PC-9 (cell line): ENCODE measurements at regions of chr5 and their contacts with region 1.

Region 1: DNA sequence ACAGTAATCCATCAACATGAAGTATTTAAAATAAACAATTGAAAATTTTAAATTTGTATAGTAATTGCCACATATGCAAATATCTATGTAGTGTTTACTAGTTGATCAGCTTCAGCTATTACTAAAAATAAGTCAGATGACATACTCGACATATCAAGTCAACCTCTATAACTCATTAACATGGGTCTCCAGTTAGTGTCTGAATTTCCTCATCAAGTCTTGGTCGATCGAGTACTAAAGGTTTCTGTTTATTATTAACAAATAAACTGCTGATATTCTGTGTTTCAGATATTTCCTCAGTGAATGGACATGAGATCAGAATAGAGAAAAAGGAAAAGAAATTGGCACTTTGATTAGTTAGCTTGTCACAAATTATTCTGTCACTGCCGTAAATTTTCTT is 266.5 kb upstream of the ITGA1 start:
- DNase-seq: no peak
- H3K4me3 ChIP-seq: no peak overlapping the region
- H3K27ac ChIP-seq: no peak overlapping the region
- H3K4me1 ChIP-seq: no peaks in the 10 kb centered on the region
- H3K27me3 ChIP-seq: no peaks in the 10 kb centered on the region
- CTCF ChIP-seq: no peak

Region 2: DNA sequence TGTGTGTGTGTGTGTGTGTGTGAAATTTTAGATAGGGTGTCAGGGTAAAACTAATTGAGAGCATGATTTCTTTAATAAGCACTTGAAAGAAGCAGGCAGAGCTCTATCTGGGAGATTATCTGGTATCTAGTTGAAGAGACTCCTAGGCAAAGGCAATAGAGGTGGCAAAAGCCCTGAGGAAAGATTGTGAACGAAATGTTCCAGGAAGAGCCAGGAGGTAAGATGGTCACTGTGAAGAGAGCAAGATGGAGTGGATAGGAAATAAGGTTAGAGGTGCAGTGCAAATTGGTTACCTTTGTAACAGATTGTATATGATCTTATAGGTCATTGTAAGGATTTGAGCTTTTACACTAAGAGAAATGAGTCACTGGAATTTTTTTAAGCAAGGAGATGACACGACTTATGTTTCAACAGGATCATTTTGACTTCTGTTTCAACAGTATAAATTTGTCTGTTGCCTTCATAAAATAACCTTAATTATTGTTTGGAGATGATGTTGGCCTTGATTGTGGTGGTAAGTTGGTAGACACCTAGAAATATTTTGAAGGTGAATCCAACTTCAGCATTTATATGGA is 1615.2 kb before region 1 on chr5:
- CTCF ChIA-PET with region 1: no interaction called
- POLR2A ChIA-PET with region 1: interaction called, 11 read pairs
- intact Hi-C with region 1: no loop called
- DNase-seq: no peak
- H3K4me3 ChIP-seq: no peak overlapping the region
- H3K27ac ChIP-seq: no peak overlapping the region
- H3K4me1 ChIP-seq: no peaks in the 10 kb centered on the region
- H3K27me3 ChIP-seq: no peaks in the 10 kb centered on the region
- CTCF ChIP-seq: no peak

Region 3: DNA sequence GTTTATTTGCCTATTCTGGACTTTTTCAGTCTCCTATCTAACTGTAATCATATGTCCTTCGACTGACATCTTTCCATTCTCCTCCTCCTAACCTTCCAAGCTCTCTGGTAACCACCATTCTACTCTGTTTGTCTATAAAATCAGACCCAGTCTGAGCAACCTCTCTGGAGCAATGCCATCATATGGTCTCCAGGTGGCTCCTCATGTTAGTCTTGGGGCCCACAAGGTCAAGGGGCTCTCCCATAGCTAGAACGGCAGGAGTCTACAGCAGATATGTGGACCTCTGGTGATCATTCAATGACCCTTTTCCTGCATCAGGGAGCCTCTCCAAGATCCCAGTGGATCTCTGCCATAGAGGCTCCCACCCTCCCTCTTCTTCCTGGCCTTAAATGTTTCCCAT is 140.9 kb before region 1 on chr5:
- CTCF ChIA-PET with region 1: no interaction called
- POLR2A ChIA-PET with region 1: interaction called, 13 read pairs
- intact Hi-C with region 1: no loop called
- DNase-seq: no peak
- H3K4me3 ChIP-seq: no peak overlapping the region
- H3K27ac ChIP-seq: no peak overlapping the region
- H3K4me1 ChIP-seq: no peaks in the 10 kb centered on the region
- H3K27me3 ChIP-seq: no peaks in the 10 kb centered on the region
- CTCF ChIP-seq: no peak